Uterus (tissue), 4 donors: ENCODE measurements at regions of chr2 and their contacts with region 1.

Region 1: DNA sequence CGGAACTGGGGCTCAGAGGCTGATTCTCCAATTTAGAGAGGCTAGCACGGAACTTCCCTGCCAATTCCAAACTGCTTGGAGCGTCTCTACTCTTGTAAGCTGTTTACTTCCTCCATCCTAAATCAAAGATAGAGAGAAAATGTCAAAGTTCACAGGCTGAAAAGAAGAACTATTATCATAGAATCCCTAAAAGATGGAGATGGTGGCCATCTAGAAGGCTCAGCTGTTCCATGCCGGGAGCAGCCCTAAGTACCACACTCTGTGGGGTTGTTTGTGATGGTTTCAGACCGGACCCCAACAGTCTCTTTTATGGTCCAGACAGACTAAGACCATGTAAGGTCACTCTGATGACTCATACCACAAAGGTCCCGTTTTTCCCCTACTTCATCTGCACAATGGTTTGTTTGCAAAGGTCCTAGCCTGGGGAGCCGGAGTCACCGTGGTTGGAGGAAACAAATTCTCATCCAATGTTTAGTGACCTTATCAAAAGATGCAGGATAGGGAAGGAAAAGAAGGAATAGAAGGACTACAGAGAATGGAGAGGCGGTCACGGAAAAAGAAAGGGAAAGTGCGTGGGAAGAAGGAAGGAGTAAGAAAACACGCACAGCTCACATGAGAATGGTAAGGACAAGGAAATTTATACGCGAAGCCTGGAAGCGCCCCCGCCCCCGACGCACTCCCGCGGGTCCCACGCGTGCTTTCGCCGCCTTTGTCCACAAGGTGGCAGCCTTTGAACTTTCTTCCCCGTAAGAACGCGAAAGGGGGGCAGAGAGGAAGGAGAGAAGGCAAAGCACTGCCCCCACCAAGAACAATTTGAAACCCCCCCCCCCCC is 453 bp upstream of the ANTXR1 start:
- DNase-seq: peak; percentile 79 to 85
- H3K4me3 ChIP-seq: peak overlapping the region; percentile 67 to 69
- H3K27ac ChIP-seq: peak overlapping the region; percentile 88 to 89
- H3K4me1 ChIP-seq: peaks cover 0 to 11% of the 10 kb centered on the region in 2 donors
- H3K27me3 ChIP-seq: no peaks in the 10 kb centered on the region
- CTCF ChIP-seq: peak; percentile 72 to 89 (median 85)
- POLR2A ChIP-seq: no peak

Region 2: GRCh38 chr2:68889500-68890185 is 122.9 kb before region 1 on chr2:
- intact Hi-C with region 1: no loop called
- DNase-seq: no peak
- H3K4me3 ChIP-seq: no peak overlapping the region
- H3K27ac ChIP-seq: no peak overlapping the region
- H3K4me1 ChIP-seq: no peaks in the 10 kb centered on the region
- H3K27me3 ChIP-seq: no peaks in the 10 kb centered on the region
- CTCF ChIP-seq: no peak
- POLR2A ChIP-seq: no peak

Region 3: GRCh38 chr2:68936427-68936826 is 76.1 kb before region 1 on chr2:
- intact Hi-C with region 1: no loop called
- DNase-seq: no peak
- H3K4me3 ChIP-seq: no peak overlapping the region
- H3K27ac ChIP-seq: no peak overlapping the region
- H3K4me1 ChIP-seq: no peaks in the 10 kb centered on the region
- H3K27me3 ChIP-seq: no peaks in the 10 kb centered on the region
- CTCF ChIP-seq: no peak
- POLR2A ChIP-seq: no peak

Region 4: GRCh38 chr2:69306822-69307578 is 294.5 kb after region 1 on chr2:
- intact Hi-C with region 1: loop called (anchors 5 kb)
- DNase-seq: peak; percentile 87 to 89
- H3K4me3 ChIP-seq: peak overlapping the region; percentile 57 to 63
- H3K27ac ChIP-seq: peak overlapping the region; percentile 89 to 97
- H3K4me1 ChIP-seq: peaks cover 0 to 7% of the 10 kb centered on the region in 2 donors
- H3K27me3 ChIP-seq: no peaks in the 10 kb centered on the region
- CTCF ChIP-seq: peak; percentile 34 to 94 (median 88)
- POLR2A ChIP-seq: peak in 1 of 2 donors; percentile 23